Dorsolateral prefrontal cortex (tissue), 120 donors: ENCODE measurements at regions of chr11 and their contacts with region 1.

Region 1: GRCh38 chr11:16440136-16440535 is 83.8 kb upstream of the SOX6 start:
- DNase-seq: no peak
- H3K4me3 ChIP-seq: no peak overlapping the region
- H3K27ac ChIP-seq: no peak overlapping the region
- H3K27me3 ChIP-seq: peaks cover 0 to 19% (median 0%) of the 10 kb centered on the region in 45 donors
- CTCF ChIP-seq: no peak

Region 2: DNA sequence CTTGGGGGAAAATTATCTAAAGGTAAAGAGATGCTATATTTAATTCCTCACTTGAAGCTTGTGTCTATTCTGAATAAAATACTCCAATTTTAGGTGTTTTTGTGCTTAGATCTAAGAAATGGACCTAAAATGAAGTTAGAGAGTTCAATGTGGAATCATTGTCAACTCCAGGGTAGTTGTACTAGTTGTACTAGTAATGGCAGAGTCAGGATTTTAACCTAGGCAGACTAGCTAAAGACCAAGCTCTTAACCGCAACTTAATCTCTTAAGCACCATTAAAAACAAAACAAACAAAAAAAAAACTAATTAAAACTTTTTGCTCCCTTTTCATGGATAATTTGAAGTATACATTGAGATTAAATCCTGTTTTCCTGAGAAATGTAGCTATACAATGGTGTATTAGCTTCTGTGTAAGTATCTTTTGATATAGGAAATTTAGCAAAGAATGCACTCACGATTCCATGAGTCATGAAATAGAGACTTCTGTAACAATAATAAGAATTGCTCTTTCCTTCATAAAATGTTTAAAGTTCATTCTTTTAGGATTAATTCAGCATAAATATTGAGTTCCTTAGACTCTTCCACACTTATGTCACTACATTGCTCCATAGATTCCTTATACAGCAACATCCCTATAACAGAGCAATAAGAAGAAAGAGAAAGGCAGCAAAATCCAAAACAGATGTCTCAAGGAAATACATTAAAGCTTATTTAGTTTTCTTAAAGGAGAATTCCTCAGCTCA is 57.3 kb before region 1 on chr11:
- intact Hi-C with region 1: no loop called
- DNase-seq: no peak
- H3K4me3 ChIP-seq: no peak overlapping the region
- H3K27ac ChIP-seq: no peak overlapping the region
- H3K27me3 ChIP-seq: peaks cover 0 to 4% (median 0%) of the 10 kb centered on the region in 45 donors
- CTCF ChIP-seq: no peak

Region 3: GRCh38 chr11:16468735-16469453 is 28.8 kb after region 1 on chr11:
- intact Hi-C with region 1: loop called in 1 of 2 experiments (anchors 2 kb)
- DNase-seq: no peak
- H3K4me3 ChIP-seq: no peak overlapping the region
- H3K27ac ChIP-seq: peak overlapping the region in 1 of 59 donors; percentile 9
- H3K27me3 ChIP-seq: no peaks in the 10 kb centered on the region
- CTCF ChIP-seq: no peak

Region 4: GRCh38 chr11:16785520-16786128 is 345.5 kb after region 1 on chr11:
- intact Hi-C with region 1: no loop called
- DNase-seq: peak; percentile 46 to 80 (median 71)
- H3K4me3 ChIP-seq: no peak overlapping the region
- H3K27ac ChIP-seq: no peak overlapping the region
- H3K27me3 ChIP-seq: no peaks in the 10 kb centered on the region
- CTCF ChIP-seq: peak; percentile 62 to 98 (median 91)